IMR-90 (cell line): ENCODE measurements at regions of chr9 and their contacts with region 1.

Region 1: DNA sequence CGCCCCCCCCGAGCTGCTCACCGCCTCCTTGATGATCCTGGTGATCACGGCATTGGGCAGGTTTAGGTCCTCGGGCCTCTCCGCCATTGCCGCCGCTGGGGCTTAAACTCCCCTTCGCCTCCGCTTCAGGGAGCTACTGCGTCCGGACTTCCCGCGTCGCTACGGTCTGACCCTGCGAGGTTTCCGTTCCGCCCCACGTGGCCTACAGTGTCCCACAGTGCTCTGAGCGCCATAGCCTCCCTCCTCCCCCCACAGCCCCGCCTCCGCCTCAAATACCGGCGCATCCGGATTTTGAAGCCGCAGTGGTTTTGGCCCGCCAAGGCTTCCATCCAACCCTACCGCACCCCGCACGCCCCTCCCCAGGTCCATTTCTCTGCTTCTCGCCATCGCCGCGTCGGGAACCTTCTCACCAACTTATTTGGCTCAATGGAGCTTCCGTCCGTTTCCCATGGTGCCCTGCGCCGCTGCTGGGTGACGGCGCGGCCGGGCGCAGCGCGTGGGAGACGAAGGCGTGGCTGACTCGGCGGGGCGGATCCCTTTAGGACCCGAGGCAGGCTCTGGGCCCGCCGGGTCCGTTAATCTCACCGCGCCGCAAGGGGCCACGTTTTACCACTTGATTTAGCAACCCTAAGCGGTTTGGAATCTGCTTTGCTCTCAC is at the starts of genes C9orf43 and POLE3:
- DNase-seq: peak; percentile 94
- ATAC-seq: peak; percentile 97
- H3K4me3 ChIP-seq: peak within 1 kb of the TSS; percentile 78
- H3K27ac ChIP-seq: peak within 1 kb of the TSS; percentile 94
- H3K4me1 ChIP-seq: peaks cover 3% of the 10 kb centered on the region; the same call in 1 of the 2 replicates
- H3K27me3 ChIP-seq: no peaks in the 10 kb centered on the region
- CTCF ChIP-seq: peak; percentile 14; the same call in 1 of the 2 replicates
- POLR2A ChIP-seq: peak; percentile 80
- RAD21 ChIP-seq: no peak
- total RNA-seq, gene C9orf43: 0.28 and 0.36 TPM in 2 replicates
- total RNA-seq, gene POLE3: 43.0 and 48.3 TPM in 2 replicates

Region 2: DNA sequence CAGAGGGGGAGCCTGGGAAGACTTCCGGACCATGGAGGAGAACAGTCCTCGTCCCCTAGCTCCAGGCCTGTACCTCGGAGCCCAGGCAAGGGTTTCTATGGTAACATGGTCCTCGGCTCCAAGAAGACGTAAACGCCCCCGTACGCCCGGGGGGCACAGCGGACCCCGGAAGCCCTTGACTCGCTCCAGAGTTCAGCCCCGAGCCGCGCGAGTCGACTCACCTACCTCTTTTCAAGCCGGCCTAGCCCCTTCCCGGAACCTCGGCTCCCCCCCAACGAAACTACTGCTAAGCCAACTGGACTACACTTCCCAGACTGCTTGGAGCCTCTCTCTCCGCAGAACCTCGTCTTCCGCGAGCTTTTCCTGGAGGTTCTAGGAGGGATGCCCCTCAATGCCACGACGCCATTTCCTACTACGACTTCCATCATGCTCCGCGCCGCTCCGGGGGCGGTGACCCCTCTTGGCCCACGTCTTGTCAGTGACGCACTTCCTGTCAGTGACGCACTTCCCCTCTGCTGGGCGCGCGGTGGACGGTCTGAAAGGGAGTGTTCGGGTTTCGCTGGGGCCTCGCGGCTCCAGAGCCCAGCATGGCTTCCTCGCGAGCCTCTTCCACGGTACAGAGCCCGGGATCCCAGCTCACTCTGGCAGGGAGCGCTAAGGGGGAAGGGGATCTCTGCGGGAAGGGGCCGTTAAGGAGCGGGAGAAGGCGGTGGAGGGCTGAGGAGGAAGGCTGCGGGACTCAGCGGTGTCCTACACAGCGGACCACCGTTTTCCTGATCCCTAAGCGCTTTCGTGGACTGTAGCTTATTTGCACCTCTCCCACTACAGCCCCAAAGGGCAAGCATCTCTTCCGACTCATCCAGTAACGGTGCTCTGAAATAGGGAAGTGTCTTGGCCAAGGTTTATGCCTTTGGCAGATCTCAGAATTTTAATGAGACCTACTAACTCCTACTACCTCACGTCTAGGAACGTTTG is 134.9 kb before region 1 on chr9 and contains the starts of genes CDC26 and PRPF4:
- CTCF ChIA-PET with region 1: no interaction called
- POLR2A ChIA-PET with region 1: interaction called, 5 read pairs
- dilution Hi-C with region 1: no loop called
- in situ Hi-C with region 1: no loop called
- intact Hi-C with region 1: loop called (anchors 1 kb)
- DNase-seq: peak; percentile 99
- ATAC-seq: peak; percentile 95
- H3K4me3 ChIP-seq: peak within 1 kb of the TSS; percentile 74
- H3K27ac ChIP-seq: peak within 1 kb of the TSS; percentile 88
- H3K4me1 ChIP-seq: peaks cover 2% of the 10 kb centered on the region; the same call in 1 of the 2 replicates
- H3K27me3 ChIP-seq: no peaks in the 10 kb centered on the region
- CTCF ChIP-seq: no peak
- POLR2A ChIP-seq: peak; percentile 97
- RAD21 ChIP-seq: no peak
- total RNA-seq, gene CDC26: 16.5 and 49.2 TPM in 2 replicates
- total RNA-seq, gene PRPF4: 32.5 and 38.0 TPM in 2 replicates

Region 3: DNA sequence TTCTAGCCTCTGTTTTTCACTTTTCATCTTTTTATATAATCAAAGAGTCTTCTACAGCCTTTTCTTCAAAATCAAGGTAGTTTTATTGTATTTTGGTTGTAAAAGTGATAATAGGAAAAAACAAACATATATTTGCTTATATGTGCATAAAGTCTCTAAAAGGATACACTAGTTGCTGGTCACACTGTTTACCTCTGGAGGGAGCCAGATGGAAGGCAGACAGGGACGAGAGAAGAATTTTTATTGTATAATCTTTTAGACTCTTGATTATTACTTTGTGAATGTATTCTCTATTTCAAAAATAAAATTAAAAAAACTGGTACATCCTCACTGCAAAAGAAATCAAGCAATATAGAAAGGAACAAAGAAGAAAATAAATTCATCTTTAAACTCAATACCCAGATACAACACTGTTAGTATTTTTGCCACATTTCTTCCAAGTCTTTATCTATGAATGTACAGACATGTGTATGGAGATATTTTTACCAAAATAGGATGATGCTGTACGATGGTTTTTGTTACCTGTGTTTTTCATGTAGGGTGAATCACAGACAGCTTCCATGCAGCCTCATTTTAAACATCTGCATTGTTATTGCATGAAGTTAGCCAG is 101.0 kb before region 1 on chr9:
- CTCF ChIA-PET with region 1: no interaction called
- POLR2A ChIA-PET with region 1: no interaction called
- dilution Hi-C with region 1: no loop called
- in situ Hi-C with region 1: no loop called
- intact Hi-C with region 1: loop called (anchors 1 kb)
- DNase-seq: peak; percentile 59
- ATAC-seq: peak; percentile 88
- H3K4me3 ChIP-seq: no peak overlapping the region
- H3K27ac ChIP-seq: no peak overlapping the region
- H3K4me1 ChIP-seq: no peaks in the 10 kb centered on the region
- H3K27me3 ChIP-seq: peaks cover 10% of the 10 kb centered on the region; the same call in 1 of the 2 replicates
- CTCF ChIP-seq: peak; percentile 87
- POLR2A ChIP-seq: no peak
- RAD21 ChIP-seq: peak; percentile 83

Region 4: DNA sequence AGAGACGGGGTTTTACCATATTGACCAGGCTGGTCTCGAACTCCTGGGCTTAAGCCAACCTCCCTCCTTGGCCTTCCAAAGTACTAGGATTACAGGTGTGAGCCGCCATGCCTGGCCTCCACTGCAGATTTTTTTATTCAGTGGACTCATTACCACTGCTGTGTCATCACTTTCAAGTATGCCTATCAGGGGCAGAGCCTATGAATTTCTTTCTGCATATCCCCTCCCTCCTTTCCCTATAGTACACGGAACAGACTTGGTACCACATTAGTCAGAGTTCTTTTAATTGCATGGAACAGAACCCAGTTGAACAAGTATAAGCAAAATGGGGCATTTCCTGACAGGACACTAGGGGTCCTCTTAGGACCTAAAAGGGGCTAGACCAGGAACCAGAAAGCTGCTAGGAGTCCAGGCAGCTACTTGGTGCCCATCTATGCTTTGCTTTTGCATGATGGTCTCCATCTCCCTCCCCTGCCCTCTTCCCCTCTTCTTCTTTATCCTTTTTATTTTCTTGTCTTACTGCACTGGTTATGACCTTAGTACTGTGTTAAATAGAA is 55.2 kb before region 1 on chr9:
- CTCF ChIA-PET with region 1: no interaction called
- POLR2A ChIA-PET with region 1: interaction called, 4 read pairs
- dilution Hi-C with region 1: no loop called
- in situ Hi-C with region 1: no loop called
- intact Hi-C with region 1: loop called (anchors 1 kb)
- DNase-seq: peak; percentile 12
- ATAC-seq: no peak; the same call in 1 of the 2 replicates
- H3K4me3 ChIP-seq: no peak overlapping the region
- H3K27ac ChIP-seq: no peak overlapping the region
- H3K4me1 ChIP-seq: no peaks in the 10 kb centered on the region
- H3K27me3 ChIP-seq: peaks cover 69% of the 10 kb centered on the region
- CTCF ChIP-seq: peak; percentile 30; the same call in 1 of the 2 replicates
- POLR2A ChIP-seq: no peak
- RAD21 ChIP-seq: peak; percentile 24; the same call in 1 of the 2 replicates